HEK293 (cell line): ENCODE measurements at regions of chr7 and their contacts with region 1.

Region 1: GRCh38 chr7:82572195-82572880 is 128.8 kb upstream of the CACNA2D1 start:
- H3K4me3 ChIP-seq: no peak overlapping the region
- H3K27ac ChIP-seq: no peak overlapping the region
- H3K4me1 ChIP-seq: no peaks in the 10 kb centered on the region
- CTCF ChIP-seq: 0 out of 2 replicates have a peak, but pooled peaks have one; percentile 40

Region 2: GRCh38 chr7:82444220-82444909 is 128.0 kb before region 1 on chr7:
- CTCF ChIA-PET with region 1: interaction called, 20 read pairs
- POLR2A ChIA-PET with region 1: no interaction called
- H3K4me3 ChIP-seq: peak overlapping the region; percentile 94
- H3K27ac ChIP-seq: peak overlapping the region; percentile 94
- H3K4me1 ChIP-seq: peaks cover 7% of the 10 kb centered on the region
- CTCF ChIP-seq: peak; percentile 66; the same call in 1 of the 2 replicates

Region 3: GRCh38 chr7:82455295-82455694 is 117.0 kb before region 1 on chr7:
- CTCF ChIA-PET with region 1: no interaction called
- POLR2A ChIA-PET with region 1: no interaction called
- H3K4me3 ChIP-seq: no peak overlapping the region
- H3K27ac ChIP-seq: no peak overlapping the region
- H3K4me1 ChIP-seq: no peaks in the 10 kb centered on the region
- CTCF ChIP-seq: no peak

Region 4: GRCh38 chr7:83248000-83248399 is 675.7 kb after region 1 on chr7:
- CTCF ChIA-PET with region 1: no interaction called
- POLR2A ChIA-PET with region 1: no interaction called
- H3K4me3 ChIP-seq: no peak overlapping the region
- H3K27ac ChIP-seq: no peak overlapping the region
- H3K4me1 ChIP-seq: no peaks in the 10 kb centered on the region
- CTCF ChIP-seq: no peak

Region 5: DNA sequence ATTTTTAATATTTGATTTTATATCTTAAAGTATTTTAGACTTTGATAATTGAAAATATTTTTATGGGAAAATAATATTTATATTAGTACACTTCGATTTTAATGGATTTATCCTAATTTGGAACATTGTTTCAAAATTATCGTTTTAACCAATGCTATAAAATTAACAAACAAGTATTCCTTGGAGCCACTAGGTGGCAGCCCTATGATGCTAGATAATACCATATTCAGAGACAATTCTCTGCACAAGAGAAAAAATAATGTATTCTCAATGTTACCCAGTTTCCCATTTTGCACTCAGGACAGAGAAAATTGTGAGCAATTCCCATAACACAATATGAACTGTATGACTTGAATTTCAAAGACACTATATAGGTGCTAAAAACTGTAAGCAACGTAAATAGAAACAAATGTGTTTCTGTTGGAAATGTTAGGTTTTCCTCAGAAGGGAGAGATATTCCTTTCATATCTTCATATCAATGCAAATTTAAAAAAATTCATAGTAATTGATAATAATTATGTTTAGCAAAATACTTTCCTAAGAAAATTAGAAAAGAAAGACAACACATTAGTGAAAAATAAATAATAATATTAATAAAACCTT is 838.8 kb after region 1 on chr7:
- CTCF ChIA-PET with region 1: no interaction called
- POLR2A ChIA-PET with region 1: no interaction called
- H3K4me3 ChIP-seq: no peak overlapping the region
- H3K27ac ChIP-seq: no peak overlapping the region
- H3K4me1 ChIP-seq: peaks cover 10% of the 10 kb centered on the region
- CTCF ChIP-seq: no peak